Aorta (tissue), 5 donors: ENCODE measurements at regions of chr17 and their contacts with region 1.

Region 1: GRCh38 chr17:40443583-40444327 is 505 bp downstream of the IGFBP4 start:
- DNase-seq: peak; percentile 91 to 94
- ATAC-seq: peak; percentile 78
- H3K4me3 ChIP-seq: peak overlapping the region; percentile 49 to 50
- H3K27ac ChIP-seq: peak overlapping the region in 1 of 2 donors; percentile 56
- H3K4me1 ChIP-seq: no peaks in the 10 kb centered on the region
- H3K27me3 ChIP-seq: no peaks in the 10 kb centered on the region

Region 2: DNA sequence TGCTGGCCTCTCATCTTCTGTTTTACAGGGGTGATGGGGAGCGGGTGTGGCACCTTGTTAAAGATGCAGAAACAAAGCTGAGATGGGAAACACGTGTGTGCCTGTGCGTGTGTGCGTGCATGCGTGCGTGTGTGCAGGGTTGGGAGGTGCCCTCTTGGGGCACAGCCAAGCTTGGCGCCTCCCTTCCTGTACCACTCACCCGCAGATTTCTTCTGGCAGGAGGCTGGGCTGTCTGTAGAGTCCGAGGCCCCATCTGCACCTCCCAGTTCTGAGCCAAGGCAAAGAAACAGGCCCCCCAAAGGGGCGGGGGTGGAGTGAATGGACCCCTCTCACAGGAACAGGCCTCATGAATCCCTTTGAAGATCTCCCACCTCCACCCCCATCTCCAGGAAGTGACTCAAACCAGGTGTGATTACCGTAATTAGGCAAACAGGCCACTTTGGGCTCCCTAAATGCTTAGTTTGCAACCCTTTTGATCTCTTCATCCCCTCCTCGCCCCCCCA is 36.8 kb after region 1 on chr17:
- intact Hi-C with region 1: loop called (anchors 1 kb)
- DNase-seq: no peak
- ATAC-seq: no peak
- H3K4me3 ChIP-seq: no peak overlapping the region
- H3K27ac ChIP-seq: no peak overlapping the region
- H3K4me1 ChIP-seq: no peaks in the 10 kb centered on the region
- H3K27me3 ChIP-seq: no peaks in the 10 kb centered on the region

Region 3: DNA sequence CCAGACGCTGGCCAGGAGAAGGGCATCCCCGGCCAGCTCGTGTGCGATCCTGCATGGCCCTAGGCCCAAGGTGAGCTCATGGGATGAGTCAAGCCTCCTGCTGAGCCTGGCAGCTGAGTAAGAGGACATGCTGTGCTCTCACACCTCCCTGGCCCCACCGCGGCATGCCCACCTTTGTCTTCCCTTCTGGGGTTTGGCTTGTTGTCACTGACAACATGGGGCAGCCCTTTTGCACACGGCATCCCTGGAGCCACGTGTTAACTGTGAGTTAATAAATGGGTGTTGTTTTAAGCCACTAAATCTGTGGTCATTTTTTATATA is 66.5 kb after region 1 on chr17:
- intact Hi-C with region 1: no loop called
- DNase-seq: peak in 1 of 2 donors; percentile 75
- ATAC-seq: no peak
- H3K4me3 ChIP-seq: no peak overlapping the region
- H3K27ac ChIP-seq: no peak overlapping the region
- H3K4me1 ChIP-seq: no peaks in the 10 kb centered on the region
- H3K27me3 ChIP-seq: no peaks in the 10 kb centered on the region

Region 4: GRCh38 chr17:40531051-40531991 is 87.6 kb after region 1 on chr17:
- intact Hi-C with region 1: loop called (anchors 2 to 5 kb)
- DNase-seq: peak in 1 of 2 donors; percentile 54
- ATAC-seq: no peak
- H3K4me3 ChIP-seq: no peak overlapping the region
- H3K27ac ChIP-seq: no peak overlapping the region
- H3K4me1 ChIP-seq: no peaks in the 10 kb centered on the region
- H3K27me3 ChIP-seq: no peaks in the 10 kb centered on the region

Region 5: DNA sequence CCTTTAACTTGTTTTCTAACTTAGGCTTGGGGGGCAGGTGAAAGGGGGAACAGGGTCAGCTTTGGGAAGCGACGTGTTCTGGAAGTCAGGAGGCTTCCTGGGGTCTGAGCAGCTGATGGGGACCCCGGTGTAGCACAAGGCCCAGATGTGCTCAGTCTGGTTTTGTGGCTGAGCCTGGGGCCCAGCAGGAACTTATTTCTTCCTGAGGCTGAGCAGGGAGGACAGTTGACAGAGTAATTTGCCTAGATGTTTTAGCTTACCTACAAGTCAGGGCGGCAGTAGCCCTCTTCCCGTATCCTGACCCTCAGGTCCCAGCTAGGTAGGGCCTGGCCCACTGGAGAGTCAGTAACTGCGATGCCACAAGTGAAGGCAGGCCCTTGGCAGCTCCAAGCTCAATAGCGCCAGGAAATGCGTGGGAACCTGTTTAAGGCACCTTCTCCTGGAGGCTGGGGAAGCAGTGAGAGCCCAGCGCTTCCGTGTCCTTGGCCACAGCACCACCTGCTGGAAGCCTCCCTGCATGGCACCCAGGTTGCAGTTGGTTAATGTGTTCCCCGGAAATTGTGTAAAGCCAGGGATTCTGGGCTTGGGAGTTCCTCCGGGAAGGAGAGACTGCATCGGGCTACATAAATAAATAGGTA is 116.3 kb after region 1 on chr17:
- intact Hi-C with region 1: loop called in 1 of 2 experiments (anchors 10 kb)
- DNase-seq: peak; percentile 90 to 95
- ATAC-seq: peak; percentile 92
- H3K4me3 ChIP-seq: no peak overlapping the region
- H3K27ac ChIP-seq: no peak overlapping the region
- H3K4me1 ChIP-seq: no peaks in the 10 kb centered on the region
- H3K27me3 ChIP-seq: no peaks in the 10 kb centered on the region